Endothelial cell of umbilical vein (primary cell): ENCODE measurements at regions of chr5 and their contacts with region 1.

Region 1: DNA sequence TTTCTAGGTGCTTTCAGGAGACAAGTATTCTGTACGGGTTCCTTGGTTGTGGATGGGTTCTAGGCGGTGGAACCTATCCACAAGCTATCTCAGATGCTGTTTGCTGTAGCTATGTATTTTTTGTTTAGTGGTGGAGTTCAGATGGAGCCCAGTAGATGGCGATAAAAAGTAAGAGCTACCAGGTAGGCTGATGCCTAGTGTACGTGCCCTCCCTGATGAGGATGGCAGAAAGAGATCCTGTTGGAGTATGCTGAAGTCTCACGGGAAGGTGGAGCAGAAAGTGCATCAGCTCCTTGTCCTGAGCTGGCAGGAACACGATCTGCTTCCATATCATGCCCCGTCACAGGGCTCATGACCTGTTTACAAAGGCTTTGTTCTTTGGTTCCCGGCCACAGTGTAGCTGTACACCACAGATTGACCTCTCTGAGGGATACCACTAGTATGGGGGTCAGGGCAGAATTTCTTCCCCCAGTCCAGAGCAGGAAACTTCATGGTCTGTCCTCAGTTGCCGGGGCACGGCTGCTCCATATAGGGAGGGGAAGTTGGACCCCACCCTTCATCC is 12.6 kb upstream of the UGT3A2 start:
- DNase-seq: peak; percentile 62
- H3K4me3 ChIP-seq: no peak overlapping the region
- H3K27ac ChIP-seq: no peak overlapping the region
- H3K4me1 ChIP-seq: no peaks in the 10 kb centered on the region
- H3K27me3 ChIP-seq: peaks cover 2 to 8% of the 10 kb centered on the region in 2 experiments
- CTCF ChIP-seq: peak; percentile 48 to 65
- POLR2A ChIP-seq: no peak

Region 2: DNA sequence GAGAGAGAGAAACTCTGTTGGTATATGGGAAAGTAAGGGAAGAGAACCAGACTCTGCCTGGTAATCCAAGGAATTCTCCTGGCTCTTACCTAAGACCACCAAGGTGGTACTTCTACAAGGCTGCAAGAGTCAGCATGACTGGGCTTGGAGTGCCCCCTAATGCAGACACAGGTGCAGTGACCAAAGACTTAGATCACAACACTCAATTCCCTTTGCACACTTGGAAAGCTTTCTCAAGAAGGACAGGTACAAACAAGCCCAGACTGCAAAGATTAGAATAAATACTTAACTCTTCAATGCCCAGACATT is 37.8 kb before region 1 on chr5:
- CTCF ChIA-PET with region 1: no interaction called
- POLR2A ChIA-PET with region 1: no interaction called
- dilution Hi-C with region 1: no loop called
- intact Hi-C with region 1: no loop called
- DNase-seq: no peak
- H3K4me3 ChIP-seq: no peak overlapping the region
- H3K27ac ChIP-seq: no peak overlapping the region
- H3K4me1 ChIP-seq: no peaks in the 10 kb centered on the region
- H3K27me3 ChIP-seq: no peaks in the 10 kb centered on the region
- CTCF ChIP-seq: no peak
- POLR2A ChIP-seq: no peak

Region 3: GRCh38 chr5:36060420-36060887 is 18.8 kb before region 1 on chr5:
- CTCF ChIA-PET with region 1: interaction called, 56 read pairs
- POLR2A ChIA-PET with region 1: no interaction called
- dilution Hi-C with region 1: no loop called
- intact Hi-C with region 1: no loop called
- DNase-seq: no peak
- H3K4me3 ChIP-seq: no peak overlapping the region
- H3K27ac ChIP-seq: no peak overlapping the region
- H3K4me1 ChIP-seq: no peaks in the 10 kb centered on the region
- H3K27me3 ChIP-seq: peaks cover 0 to 3% of the 10 kb centered on the region in 2 experiments
- CTCF ChIP-seq: no peak
- POLR2A ChIP-seq: no peak

Region 4: GRCh38 chr5:36096486-36096885 is 17.2 kb after region 1 on chr5:
- CTCF ChIA-PET with region 1: interaction called, 83 read pairs
- POLR2A ChIA-PET with region 1: no interaction called
- dilution Hi-C with region 1: no loop called
- intact Hi-C with region 1: no loop called
- DNase-seq: no peak
- H3K4me3 ChIP-seq: no peak overlapping the region
- H3K27ac ChIP-seq: no peak overlapping the region
- H3K4me1 ChIP-seq: no peaks in the 10 kb centered on the region
- H3K27me3 ChIP-seq: no peaks in the 10 kb centered on the region
- CTCF ChIP-seq: no peak
- POLR2A ChIP-seq: no peak

Region 5: GRCh38 chr5:36177715-36178523 is 98.6 kb after region 1 on chr5:
- CTCF ChIA-PET with region 1: interaction called, 19 read pairs
- POLR2A ChIA-PET with region 1: no interaction called
- dilution Hi-C with region 1: no loop called
- intact Hi-C with region 1: no loop called
- DNase-seq: peak; percentile 54
- H3K4me3 ChIP-seq: no peak overlapping the region
- H3K27ac ChIP-seq: no peak overlapping the region
- H3K4me1 ChIP-seq: no peaks in the 10 kb centered on the region
- H3K27me3 ChIP-seq: no peaks in the 10 kb centered on the region
- CTCF ChIP-seq: peak; percentile 28 to 33
- POLR2A ChIP-seq: no peak

Region 6: DNA sequence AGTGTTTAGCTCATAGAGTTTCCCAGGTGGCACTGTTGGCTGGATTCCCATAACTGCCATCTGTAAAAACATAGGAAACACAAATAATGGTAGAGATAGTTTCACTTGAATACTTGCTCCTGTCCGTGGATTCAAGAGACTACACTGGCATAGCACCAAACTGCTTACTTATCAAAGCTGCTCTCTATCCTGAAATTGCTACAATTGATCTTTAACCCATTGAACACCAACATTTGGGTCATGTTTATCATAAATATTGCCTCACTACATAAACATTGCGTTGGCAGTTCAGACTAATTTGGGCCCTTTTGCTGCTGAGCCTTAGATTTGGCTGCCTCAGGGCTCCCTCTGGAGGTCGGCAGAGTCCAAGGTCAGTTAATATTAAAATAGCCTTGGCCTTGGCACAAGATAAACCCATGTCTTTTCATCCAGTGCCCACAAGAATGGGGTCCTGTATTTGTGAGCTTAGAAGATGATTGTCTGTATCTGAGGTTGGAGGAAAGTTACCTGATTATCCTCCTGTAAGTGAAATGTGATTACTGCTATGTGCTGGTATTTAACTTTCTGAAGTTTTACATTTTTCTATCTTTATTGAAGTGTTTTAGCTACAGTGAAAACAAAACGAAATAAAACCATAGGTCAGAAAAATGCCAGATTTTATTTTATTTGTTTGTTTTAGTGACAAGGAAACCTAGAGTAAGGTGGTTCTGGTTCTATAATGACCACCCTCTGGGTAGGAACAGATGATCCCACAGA is 226.5 kb after region 1 on chr5:
- CTCF ChIA-PET with region 1: interaction called, 24 read pairs
- POLR2A ChIA-PET with region 1: no interaction called
- dilution Hi-C with region 1: no loop called
- intact Hi-C with region 1: loop called (anchors 1 kb)
- DNase-seq: peak; percentile 61
- H3K4me3 ChIP-seq: no peak overlapping the region
- H3K27ac ChIP-seq: no peak overlapping the region
- H3K4me1 ChIP-seq: no peaks in the 10 kb centered on the region
- H3K27me3 ChIP-seq: peaks cover 6 to 9% of the 10 kb centered on the region in 2 experiments
- CTCF ChIP-seq: peak; percentile 58 to 59
- POLR2A ChIP-seq: no peak

Region 7: DNA sequence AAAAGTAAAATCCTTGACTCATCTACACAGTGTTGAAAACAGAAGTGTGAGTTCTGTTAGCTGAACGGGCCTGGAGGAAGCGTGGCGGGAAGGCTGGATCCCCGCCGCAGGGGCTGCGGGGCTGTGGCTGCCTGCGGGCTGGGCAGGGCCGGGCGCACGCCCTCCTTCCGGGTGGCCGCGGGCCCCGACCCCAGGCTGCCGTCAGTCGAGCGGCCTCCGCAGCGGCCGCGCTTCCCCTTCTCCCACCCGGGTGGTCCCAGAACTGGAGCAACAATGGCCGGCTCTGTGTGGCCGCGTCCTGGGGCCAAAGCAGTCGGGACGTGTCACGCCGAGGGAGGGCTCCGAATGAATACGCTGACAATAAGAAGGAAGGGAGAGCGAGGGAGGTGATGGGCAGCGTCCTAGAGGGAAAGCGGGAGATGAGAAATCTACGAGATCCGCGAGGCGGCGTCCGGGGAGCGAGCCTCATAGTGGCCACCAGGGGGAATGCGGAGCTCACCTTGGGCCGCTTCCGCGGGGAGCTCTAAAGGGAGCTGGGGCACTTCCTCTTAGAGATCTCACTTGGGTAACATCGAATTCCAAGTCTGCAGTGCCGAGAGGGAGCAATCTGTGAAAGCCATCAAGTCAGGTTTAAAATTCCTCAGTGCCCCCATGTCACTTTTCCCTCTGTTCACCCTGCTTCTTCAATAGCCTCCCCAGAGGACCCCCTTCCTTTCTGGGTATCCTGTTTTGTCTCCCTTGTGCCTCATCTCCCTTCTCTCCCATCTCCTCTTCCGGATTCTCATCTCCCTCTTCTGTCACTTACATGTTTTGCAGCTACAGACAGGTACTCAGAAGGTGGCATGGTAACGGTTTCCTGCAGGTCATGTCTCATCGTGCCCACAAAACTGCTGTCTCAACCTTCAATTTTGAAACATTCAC is 611.0 kb after region 1 on chr5:
- CTCF ChIA-PET with region 1: interaction called, 30 read pairs
- POLR2A ChIA-PET with region 1: no interaction called
- dilution Hi-C with region 1: no loop called
- intact Hi-C with region 1: loop called (anchors 1 kb)
- DNase-seq: peak; percentile 48
- H3K4me3 ChIP-seq: peak overlapping the region; percentile 16 to 36 (median 28)
- H3K27ac ChIP-seq: no peak overlapping the region
- H3K4me1 ChIP-seq: no peaks in the 10 kb centered on the region
- H3K27me3 ChIP-seq: peaks cover 2 to 3% of the 10 kb centered on the region in 2 experiments
- CTCF ChIP-seq: peak; percentile 82 to 92
- POLR2A ChIP-seq: no peak